Activated CD8-positive, alpha-beta T cell treated with anti-CD3 and anti-CD28 coated beads for 36 hours (primary cell): ENCODE measurements at regions of chr3 and their contacts with region 1.

Region 1: GRCh38 chr3:115659253-115660220 is 36.2 kb downstream of the GAP43 start:
- DNase-seq: peak; percentile 32
- ATAC-seq: peak; percentile 5
- H3K4me3 Mint-ChIP-seq: peak overlapping the region; percentile 81
- H3K27ac Mint-ChIP-seq: peak overlapping the region; percentile 100
- H3K4me1 Mint-ChIP-seq: peaks cover 61% of the 10 kb centered on the region
- H3K27me3 Mint-ChIP-seq: peaks cover 2% of the 10 kb centered on the region
- CTCF ChIP-seq: no peak

Region 2: GRCh38 chr3:115783938-115784738 is 124.6 kb after region 1 on chr3:
- CTCF ChIA-PET with region 1: interaction called, 10 read pairs
- POLR2A ChIA-PET with region 1: no interaction called
- intact Hi-C with region 1: loop called (anchors 10 kb)
- DNase-seq: peak; percentile 96
- ATAC-seq: peak; percentile 87
- H3K4me3 Mint-ChIP-seq: peak overlapping the region; percentile 73
- H3K27ac Mint-ChIP-seq: peak overlapping the region; percentile 97
- H3K4me1 Mint-ChIP-seq: peaks cover 18% of the 10 kb centered on the region
- H3K27me3 Mint-ChIP-seq: no peaks in the 10 kb centered on the region
- CTCF ChIP-seq: peak; percentile 85